Prostate gland (tissue), 2 donors: ENCODE measurements at regions of chr18 and their contacts with region 1.

Region 1: GRCh38 chr18:53567929-53568574 is 656.4 kb downstream of the MBD2 start:
- DNase-seq: no peak
- H3K4me3 ChIP-seq: no peak overlapping the region
- H3K27ac ChIP-seq: no peak overlapping the region
- H3K4me1 ChIP-seq: no peaks in the 10 kb centered on the region
- H3K27me3 ChIP-seq: no peaks in the 10 kb centered on the region
- CTCF ChIP-seq: peak; percentile 14 to 50 (median 45)
- POLR2A ChIP-seq: no peak

Region 2: DNA sequence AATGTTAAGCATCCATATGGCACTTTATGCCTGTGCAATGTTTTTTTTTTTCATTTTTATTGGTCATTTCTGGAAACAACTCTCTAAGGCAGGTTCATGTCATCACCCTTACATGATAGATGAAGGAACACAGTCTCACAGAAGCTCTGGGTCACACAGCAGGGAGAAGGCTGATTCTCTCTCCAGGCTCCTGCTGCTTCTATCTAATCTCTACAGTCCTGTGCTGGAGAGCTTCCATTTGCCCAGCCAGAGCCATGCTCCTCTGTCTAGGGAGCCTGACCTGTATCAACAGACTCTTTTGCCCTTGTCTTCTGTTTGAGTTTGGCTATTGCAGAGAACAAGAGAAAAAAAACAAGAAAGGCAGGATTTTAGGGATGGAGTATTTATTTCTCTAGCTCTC is 71.6 kb after region 1 on chr18:
- intact Hi-C with region 1: loop called (anchors 10 kb)
- DNase-seq: no peak
- H3K4me3 ChIP-seq: no peak overlapping the region
- H3K27ac ChIP-seq: no peak overlapping the region
- H3K4me1 ChIP-seq: no peaks in the 10 kb centered on the region
- H3K27me3 ChIP-seq: no peaks in the 10 kb centered on the region
- CTCF ChIP-seq: no peak
- POLR2A ChIP-seq: no peak

Region 3: DNA sequence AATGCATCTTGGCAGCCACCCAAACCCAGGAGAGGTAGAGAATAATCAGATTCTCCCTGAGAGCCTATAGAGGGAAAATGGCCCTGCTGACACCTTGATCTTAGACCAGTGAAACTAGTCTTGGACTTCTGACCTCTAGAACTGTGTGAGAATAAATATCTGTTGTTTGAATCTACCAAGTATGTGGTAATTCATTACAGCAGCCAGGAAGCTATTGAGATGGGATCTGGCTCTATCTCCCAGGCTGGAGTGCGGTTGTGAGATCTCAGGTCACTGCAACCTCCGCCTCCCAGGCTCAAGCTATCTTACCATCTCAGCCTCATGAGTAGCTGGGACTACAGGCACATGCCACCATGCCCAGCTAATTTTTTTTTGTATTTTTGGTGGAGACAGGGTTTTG is 89.2 kb after region 1 on chr18:
- intact Hi-C with region 1: no loop called
- DNase-seq: no peak
- H3K4me3 ChIP-seq: no peak overlapping the region
- H3K27ac ChIP-seq: no peak overlapping the region
- H3K4me1 ChIP-seq: no peaks in the 10 kb centered on the region
- H3K27me3 ChIP-seq: no peaks in the 10 kb centered on the region
- CTCF ChIP-seq: no peak
- POLR2A ChIP-seq: no peak

Region 4: DNA sequence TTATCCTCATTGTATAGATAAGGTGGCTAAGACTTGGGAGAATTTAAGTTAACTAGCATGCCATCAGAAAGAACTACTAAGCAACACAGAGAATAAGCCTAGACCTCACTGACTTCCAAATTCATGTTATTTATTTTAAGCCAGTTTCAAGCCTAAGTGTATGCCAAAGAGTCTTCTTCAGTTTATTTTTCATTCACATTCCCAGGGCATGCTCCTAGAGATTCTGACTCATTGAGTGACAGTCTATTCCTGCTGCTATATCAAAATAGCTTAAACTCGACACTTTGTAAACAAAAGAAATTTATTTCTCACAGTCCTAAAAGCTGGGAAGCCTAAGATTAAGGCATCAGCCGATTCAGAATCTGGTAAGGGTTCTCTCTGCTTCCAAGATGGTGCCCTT is 189.3 kb after region 1 on chr18:
- intact Hi-C with region 1: no loop called
- DNase-seq: no peak
- H3K4me3 ChIP-seq: no peak overlapping the region
- H3K27ac ChIP-seq: no peak overlapping the region
- H3K4me1 ChIP-seq: no peaks in the 10 kb centered on the region
- H3K27me3 ChIP-seq: no peaks in the 10 kb centered on the region
- CTCF ChIP-seq: no peak
- POLR2A ChIP-seq: no peak